Mammary epithelial cell (primary cell): ENCODE measurements at regions of chr16 and their contacts with region 1.

Region 1: GRCh38 chr16:28943281-28943680 is 7.5 kb upstream of the NFATC2IP start:
- DNase-seq: no peak
- H3K4me3 ChIP-seq: no peak overlapping the region
- H3K27ac ChIP-seq: no peak overlapping the region
- H3K4me1 ChIP-seq: peaks cover 13% of the 10 kb centered on the region
- H3K27me3 ChIP-seq: no peaks in the 10 kb centered on the region
- CTCF ChIP-seq: no peak

Region 2: DNA sequence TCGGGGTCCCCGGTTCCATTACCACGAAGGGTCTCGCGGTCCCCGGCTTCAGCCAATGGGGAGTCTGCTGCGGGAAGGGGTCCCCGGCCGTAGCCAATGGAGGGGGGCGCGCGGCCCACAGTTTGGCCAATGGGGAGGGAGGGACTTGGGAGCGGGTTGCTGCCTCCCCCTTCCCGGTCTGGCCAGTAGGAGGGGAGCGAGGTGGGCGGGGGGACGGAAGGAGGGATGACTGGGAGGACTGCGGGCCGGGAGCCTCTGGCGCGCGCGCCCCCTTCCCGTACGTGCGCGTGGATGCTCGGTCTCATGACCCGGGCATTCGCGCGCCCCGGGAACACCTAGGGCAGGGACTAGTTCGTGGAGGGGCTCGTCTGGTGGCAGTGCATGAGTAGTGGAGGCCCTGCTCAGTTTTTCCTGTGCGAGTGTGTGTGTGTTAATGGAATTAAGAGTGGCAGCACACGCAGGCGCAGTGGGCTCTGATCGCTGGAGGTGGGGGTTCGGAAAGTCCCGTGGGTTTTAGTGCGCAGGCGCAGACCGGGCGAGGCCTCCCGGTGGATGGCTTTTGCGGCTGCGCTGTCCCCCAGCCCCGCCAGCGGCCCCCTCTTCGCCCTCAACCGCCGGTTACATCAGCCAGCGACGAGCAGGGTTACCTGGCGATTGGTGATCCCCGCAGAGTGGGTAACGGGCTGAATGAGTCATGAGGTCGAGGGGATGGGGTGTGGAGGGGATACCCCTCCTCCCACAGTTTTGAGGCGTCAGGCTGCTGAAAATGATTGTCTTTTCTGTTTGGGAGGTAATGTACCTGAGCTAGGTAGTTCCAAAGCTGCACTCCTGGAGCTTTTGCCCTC is 119.2 kb before region 1 on chr16:
- CTCF ChIA-PET with region 1: interaction called, 6 read pairs
- dilution Hi-C with region 1: no loop called
- in situ Hi-C with region 1: no loop called
- intact Hi-C with region 1: loop called (anchors 1 kb)
- DNase-seq: peak; percentile 96
- H3K4me3 ChIP-seq: peak overlapping the region; percentile 78 to 91 (median 91)
- H3K27ac ChIP-seq: peak overlapping the region; percentile 94
- H3K4me1 ChIP-seq: peaks cover 37% of the 10 kb centered on the region
- H3K27me3 ChIP-seq: no peaks in the 10 kb centered on the region
- CTCF ChIP-seq: peak in 1 of 2 donors; percentile 25

Region 3: GRCh38 chr16:28863929-28864793 is 79.1 kb before region 1 on chr16:
- CTCF ChIA-PET with region 1: no interaction called
- dilution Hi-C with region 1: no loop called
- in situ Hi-C with region 1: loop called in 1 of 2 experiments (anchors 10 kb)
- intact Hi-C with region 1: no loop called
- DNase-seq: peak; percentile 29
- H3K4me3 ChIP-seq: peak overlapping the region; percentile 70 to 99 (median 75)
- H3K27ac ChIP-seq: peak overlapping the region; percentile 76
- H3K4me1 ChIP-seq: peaks cover 9% of the 10 kb centered on the region
- H3K27me3 ChIP-seq: no peaks in the 10 kb centered on the region
- CTCF ChIP-seq: no peak

Region 4: DNA sequence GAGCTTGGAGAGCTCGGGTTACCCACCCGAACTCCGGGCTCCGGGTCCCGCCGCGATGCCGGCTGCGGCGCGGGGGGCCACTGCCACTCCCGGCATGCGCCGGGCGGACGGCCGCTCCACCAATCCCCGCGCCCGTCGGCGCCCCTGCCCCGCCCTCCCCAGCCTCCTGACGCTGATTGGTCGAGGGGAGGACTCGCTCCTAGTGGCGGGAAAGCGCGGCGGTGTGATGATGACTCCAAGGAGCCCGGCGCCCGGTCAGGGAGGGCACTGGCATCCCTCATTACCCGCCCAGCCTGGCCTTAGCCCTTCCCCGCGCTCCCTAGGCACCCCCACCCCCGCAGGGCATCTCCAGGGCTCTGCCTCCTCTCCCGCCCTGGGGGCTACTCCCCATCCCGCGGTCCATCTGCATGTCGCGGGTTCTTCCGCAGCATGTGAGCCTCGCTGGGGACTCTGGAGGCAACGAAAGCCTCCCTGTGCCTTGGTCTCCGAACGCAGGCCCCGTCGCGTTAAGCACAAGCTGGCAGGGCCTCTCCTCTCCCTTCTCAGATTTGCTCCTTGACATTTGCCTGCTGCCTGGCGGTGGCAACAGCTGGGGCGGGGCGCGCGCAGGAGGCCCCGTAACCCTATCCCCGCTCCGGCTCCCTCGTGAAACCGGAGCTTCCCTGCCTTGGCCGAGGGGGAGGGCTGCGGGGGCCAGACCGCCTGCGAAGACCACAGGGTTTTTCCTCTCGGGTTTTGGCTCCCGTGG is 63.3 kb before region 1 on chr16:
- CTCF ChIA-PET with region 1: no interaction called
- dilution Hi-C with region 1: loop called (anchors 10 kb)
- in situ Hi-C with region 1: no loop called
- intact Hi-C with region 1: no loop called
- DNase-seq: peak; percentile 78
- H3K4me3 ChIP-seq: peak overlapping the region; percentile 49 to 57 (median 57)
- H3K27ac ChIP-seq: no peak overlapping the region
- H3K4me1 ChIP-seq: peaks cover 11% of the 10 kb centered on the region
- H3K27me3 ChIP-seq: no peaks in the 10 kb centered on the region
- CTCF ChIP-seq: no peak

Region 5: DNA sequence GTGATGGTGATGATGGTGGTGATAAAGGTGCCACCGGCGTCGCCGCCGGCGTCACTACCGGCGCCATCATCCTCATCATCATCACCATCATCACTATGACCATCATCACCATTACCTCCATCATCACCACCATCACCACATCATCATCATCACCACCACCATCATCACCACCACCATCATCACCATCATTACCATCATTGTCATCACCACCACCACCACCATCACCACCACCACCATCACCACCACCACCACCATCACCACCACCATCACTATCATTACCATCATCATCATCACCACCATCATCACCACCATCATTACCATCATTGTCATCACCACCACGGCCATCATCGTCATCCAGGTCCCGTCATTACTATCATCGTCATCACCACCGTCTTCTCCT is 283.5 kb after region 1 on chr16:
- CTCF ChIA-PET with region 1: no interaction called
- dilution Hi-C with region 1: no loop called
- in situ Hi-C with region 1: no loop called
- intact Hi-C with region 1: no loop called
- DNase-seq: no peak
- H3K4me3 ChIP-seq: no peak overlapping the region
- H3K27ac ChIP-seq: no peak overlapping the region
- H3K4me1 ChIP-seq: no peaks in the 10 kb centered on the region
- H3K27me3 ChIP-seq: no peaks in the 10 kb centered on the region
- CTCF ChIP-seq: no peak